Breast epithelium (tissue), 4 donors: ENCODE measurements at regions of chrX and their contacts with region 1.

Region 1: DNA sequence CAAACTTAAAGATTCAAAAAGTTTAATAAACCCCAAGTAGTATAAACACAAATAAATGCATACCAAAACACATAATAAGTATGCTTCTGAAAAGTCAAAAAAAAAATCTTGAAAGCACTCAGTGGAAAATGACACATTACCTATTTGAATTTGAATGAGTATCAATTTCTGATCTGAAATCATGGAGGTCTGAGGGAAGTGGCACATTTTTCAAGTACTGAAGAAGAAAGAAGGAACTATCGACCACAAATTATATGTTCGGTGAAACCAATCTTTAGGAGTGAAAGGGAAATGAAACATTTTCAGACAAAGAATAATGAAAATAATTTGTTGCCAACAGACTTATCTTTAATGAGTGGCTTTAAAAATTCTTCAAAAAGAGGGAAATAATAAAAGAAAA is 12.1 kb upstream of the F9 start:
- DNase-seq: no peak
- H3K4me3 ChIP-seq: no peak overlapping the region
- H3K27ac ChIP-seq: no peak overlapping the region
- H3K4me1 ChIP-seq: no peaks in the 10 kb centered on the region
- H3K27me3 ChIP-seq: peaks cover 0 to 3% of the 10 kb centered on the region in 2 donors
- CTCF ChIP-seq: no peak
- POLR2A ChIP-seq: no peak

Region 2: DNA sequence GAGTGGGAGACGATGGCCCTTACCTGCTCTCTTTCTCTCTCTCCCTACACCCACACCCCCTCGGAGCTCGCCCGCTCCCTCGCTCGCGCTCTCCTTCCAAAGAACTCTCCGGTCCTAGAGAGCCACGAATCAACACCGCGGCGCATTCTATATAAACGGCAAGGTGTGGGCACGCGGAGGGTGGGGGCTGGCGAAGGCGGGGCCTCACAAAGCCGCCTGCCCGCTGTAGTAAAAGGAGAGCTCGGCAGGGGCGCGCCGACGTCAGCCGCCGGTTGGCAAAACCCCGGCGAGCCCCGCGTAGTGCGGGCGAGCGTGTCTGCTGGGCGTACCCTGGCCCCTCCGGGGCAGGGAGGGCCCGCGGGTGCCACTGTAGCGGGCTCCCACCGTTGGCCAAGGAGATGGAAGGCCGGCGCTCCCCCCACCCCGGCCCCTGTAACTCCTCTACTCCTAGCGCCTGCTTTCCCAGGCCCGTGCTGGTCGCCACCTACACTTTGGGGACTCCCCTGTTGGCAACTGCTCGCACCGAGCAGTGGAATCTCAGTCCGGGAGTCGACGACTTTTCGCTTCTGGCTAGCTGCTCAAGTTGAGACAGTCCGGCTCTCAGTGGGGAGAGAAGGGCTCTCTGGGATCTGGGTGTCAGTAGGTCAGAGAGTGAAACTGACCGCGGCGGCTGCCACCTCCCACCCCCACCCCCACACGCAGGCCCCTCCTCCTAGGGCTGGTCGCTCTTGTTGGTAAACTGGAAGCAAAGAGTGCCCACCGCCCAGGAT is 313.4 kb before region 1 on chrX:
- intact Hi-C with region 1: no loop called
- DNase-seq: peak; percentile 50 to 64
- H3K4me3 ChIP-seq: peak overlapping the region; percentile 54 to 68 (median 58)
- H3K27ac ChIP-seq: peak overlapping the region; percentile 62 to 66
- H3K4me1 ChIP-seq: no peaks in the 10 kb centered on the region
- H3K27me3 ChIP-seq: peaks cover 0 to 50% of the 10 kb centered on the region in 2 donors
- CTCF ChIP-seq: no peak
- POLR2A ChIP-seq: no peak

Region 3: GRCh38 chrX:140661643-140662042 is 1143.2 kb after region 1 on chrX:
- intact Hi-C with region 1: loop called (anchors 10 kb)
- DNase-seq: no peak
- H3K4me3 ChIP-seq: no peak overlapping the region
- H3K27ac ChIP-seq: no peak overlapping the region
- H3K4me1 ChIP-seq: no peaks in the 10 kb centered on the region
- H3K27me3 ChIP-seq: peaks cover 0 to 37% of the 10 kb centered on the region in 2 donors
- CTCF ChIP-seq: no peak
- POLR2A ChIP-seq: no peak